Common myeloid progenitor, CD34-positive (primary cell): ENCODE measurements at regions of chr12 and their contacts with region 1.

Region 1: DNA sequence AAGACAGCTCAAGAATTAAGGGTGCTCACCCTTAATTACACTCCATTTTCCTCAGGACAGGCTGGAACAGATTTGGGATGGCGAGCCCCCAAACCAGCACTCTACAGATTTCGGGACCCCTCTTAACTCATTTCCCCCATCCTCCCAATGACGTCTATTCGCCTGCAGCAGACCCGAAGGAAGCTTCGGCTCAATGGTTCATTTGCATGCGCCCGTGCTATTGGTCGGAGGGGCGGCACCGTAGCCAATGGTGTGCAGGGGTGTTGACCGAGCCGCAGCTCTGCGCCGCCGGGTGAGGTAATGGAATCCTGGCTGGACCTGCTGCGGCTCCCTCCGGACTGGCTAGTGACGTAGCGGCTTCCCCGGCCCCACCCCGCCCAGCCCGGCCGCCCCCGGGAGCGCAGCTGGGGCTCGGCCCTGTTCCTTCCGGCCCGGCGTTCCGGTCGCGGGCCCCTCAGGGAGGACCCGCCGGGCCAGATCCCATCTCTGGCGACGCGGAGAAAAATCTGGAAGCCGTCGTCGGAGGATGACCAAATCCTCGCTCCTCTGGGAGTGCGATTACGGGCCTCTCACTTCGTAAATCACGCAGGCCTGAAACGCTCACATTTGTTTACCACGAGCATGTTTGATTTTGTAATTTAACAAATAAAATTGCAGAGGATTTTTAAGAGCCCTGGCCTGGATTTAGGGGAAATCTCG is 18.3 kb upstream of the NR4A1 start:
- DNase-seq: peak; percentile 90 to 95 (median 93)
- H3K4me3 ChIP-seq: peak overlapping the region in 6 of 7 experiments; percentile 44 to 71 (median 56)
- H3K27ac ChIP-seq: peak overlapping the region in 1 of 2 experiments; percentile 43
- H3K4me1 ChIP-seq: peaks cover 0 to 36% (median 29%) of the 10 kb centered on the region in 4 experiments
- H3K27me3 ChIP-seq: peaks cover 0 to 33% (median 9%) of the 10 kb centered on the region in 5 experiments

Region 2: GRCh38 chr12:52069327-52070184 is 36.6 kb after region 1 on chr12 and contains the start of gene ATG101:
- CTCF ChIA-PET with region 1: interaction called, 661 read pairs
- POLR2A ChIA-PET with region 1: interaction called, 8 read pairs
- DNase-seq: peak; percentile 96 to 98 (median 97)
- H3K4me3 ChIP-seq: peak within 1 kb of the TSS; percentile 69 to 99 (median 93)
- H3K27ac ChIP-seq: peak within 1 kb of the TSS; percentile 95 to 98
- H3K4me1 ChIP-seq: peaks cover 4 to 19% (median 18%) of the 10 kb centered on the region in 4 experiments
- H3K27me3 ChIP-seq: no peaks in the 10 kb centered on the region